ENCODE measurements at regions of chr1 and their contacts with region 1.

Region 1: DNA sequence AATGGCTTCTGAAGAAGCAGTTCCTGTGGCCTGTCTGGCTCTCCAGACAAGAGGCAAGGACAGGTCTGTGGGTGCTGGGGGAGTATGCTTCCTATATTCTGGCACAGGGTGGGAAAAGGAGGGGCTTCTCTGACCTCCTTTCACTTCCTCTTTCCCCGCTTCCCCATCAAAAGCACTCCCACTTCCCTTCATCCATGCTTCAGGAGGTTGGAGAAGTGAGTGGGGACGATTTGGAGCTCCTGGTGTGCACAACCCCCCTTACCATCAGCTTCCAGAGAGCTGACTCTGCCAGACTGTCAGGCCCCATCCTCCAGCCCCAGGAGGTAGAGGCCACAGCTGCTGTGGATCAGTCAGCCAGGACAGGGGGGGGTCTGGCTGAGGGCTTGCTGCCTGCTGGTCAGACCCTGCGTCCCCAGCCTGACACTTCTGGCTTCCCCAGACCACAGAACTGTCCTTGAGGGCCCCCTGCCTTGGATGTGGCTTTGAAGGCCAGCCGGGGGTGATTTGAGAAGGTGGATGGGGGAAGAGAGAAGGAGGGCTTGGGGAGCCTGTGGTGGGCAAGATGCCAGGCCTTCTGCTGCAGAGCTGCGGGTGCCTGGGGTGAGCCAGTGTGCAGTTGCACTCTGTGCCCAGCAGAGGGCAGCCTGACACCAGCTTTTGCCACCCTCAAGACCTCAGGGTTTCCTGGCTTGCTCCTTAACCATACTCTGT is 21.5 kb upstream of the TMEM222 start:
- DNase-seq: peak; percentile 88 to 93 (median 90)
- ATAC-seq: peak; percentile 95
- H3K4me3 ChIP-seq: no peak overlapping the region
- H3K27ac ChIP-seq: no peak overlapping the region
- H3K4me1 ChIP-seq: peaks cover 0 to 7% of the 10 kb centered on the region in 2 experiments; a peak in 2 of 5 replicates
- H3K27me3 ChIP-seq: no peaks in the 10 kb centered on the region
- CTCF ChIP-seq: peak; percentile 97 to 99 (median 98)
- EP300 ChIP-seq: no peak
- POLR2A ChIP-seq: no peak
- RAD21 ChIP-seq: peak; percentile 93 to 98

Region 2: DNA sequence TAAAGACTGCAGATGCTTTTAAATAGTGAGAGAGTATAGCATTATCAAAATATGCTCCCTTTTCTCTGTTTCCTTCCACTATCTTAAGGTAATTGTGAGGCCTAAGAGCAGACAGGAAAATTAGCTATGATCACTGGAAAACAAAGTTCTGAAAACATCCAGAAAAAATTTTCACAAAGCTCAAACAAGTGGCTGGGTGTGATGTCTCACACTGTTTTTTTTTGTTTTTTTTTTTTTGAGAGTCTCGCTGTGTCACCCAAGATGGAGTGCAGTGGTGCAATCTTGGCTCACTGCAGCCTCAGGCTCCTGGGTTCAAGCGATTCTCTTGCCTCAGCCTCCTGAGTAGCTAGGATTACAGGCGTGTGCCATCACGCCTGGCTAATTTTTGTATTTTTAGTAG is 58.8 kb before region 1 on chr1:
- CTCF ChIA-PET with region 1: no interaction called
- POLR2A ChIA-PET with region 1: no interaction called
- in situ Hi-C with region 1: no loop called
- intact Hi-C with region 1: no loop called
- DNase-seq: no peak
- ATAC-seq: no peak
- H3K4me3 ChIP-seq: no peak overlapping the region
- H3K27ac ChIP-seq: no peak overlapping the region
- H3K4me1 ChIP-seq: no peaks in the 10 kb centered on the region; a peak in 2 of 5 replicates
- H3K27me3 ChIP-seq: no peaks in the 10 kb centered on the region
- CTCF ChIP-seq: no peak
- EP300 ChIP-seq: no peak
- POLR2A ChIP-seq: no peak
- RAD21 ChIP-seq: no peak

Region 3: GRCh38 chr1:27357281-27358037 is 57.0 kb after region 1 on chr1:
- CTCF ChIA-PET with region 1: interaction called, 4 read pairs
- POLR2A ChIA-PET with region 1: interaction called, 3 read pairs
- in situ Hi-C with region 1: no loop called
- intact Hi-C with region 1: loop called (anchors 5 kb)
- DNase-seq: peak; percentile 85 to 94 (median 90)
- ATAC-seq: peak; percentile 90
- H3K4me3 ChIP-seq: no peak overlapping the region
- H3K27ac ChIP-seq: no peak overlapping the region
- H3K4me1 ChIP-seq: peaks cover 9 to 53% of the 10 kb centered on the region in 2 experiments
- H3K27me3 ChIP-seq: no peaks in the 10 kb centered on the region
- CTCF ChIP-seq: peak; percentile 95 to 98 (median 96)
- EP300 ChIP-seq: no peak
- POLR2A ChIP-seq: no peak
- RAD21 ChIP-seq: peak; percentile 61 to 84

Region 4: DNA sequence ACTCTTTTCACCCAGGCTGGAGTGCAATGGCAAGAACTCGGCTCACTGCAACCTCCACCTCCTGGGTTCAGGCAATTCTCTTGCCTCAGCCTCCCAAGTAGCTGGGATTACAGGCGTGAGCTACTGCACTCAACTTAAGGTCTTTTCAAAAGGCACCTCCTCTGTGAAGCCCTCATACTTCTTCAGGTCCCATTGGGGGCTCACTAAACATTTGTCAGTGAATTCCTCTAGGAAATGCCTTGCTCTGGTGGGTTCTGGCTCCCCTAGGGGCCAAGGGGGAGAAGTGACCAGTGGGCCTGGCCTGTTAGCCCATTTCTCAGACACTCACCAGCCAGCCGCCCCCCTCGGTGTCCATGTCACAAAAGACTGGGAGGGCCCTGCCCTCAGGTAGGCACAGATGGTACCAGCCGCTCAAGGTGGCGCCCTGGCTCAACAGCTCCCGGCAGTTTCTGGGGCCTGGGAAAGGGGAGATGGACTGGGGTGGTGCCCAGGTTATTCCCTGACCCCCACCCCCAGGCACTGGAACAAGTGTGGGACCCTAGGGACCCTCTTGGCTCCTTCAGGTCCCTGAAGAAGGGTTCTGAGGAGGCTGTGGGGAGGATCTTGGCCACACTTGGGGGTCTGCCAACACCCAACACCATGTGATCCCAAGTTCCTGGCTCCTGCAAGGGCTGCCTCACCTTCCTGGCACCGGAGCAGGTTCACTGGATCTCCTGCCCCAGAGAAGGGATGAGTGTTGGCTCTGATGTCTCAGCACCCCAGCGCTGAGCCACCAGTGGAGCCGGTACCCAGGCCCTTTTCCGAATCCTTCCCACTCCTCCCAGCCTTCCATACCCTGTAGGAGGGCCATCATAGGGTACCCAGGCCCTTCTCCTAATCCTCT is 72.6 kb after region 1 on chr1:
- CTCF ChIA-PET with region 1: interaction called, 5 read pairs
- POLR2A ChIA-PET with region 1: no interaction called
- in situ Hi-C with region 1: no loop called
- intact Hi-C with region 1: loop called (anchors 5 kb)
- DNase-seq: peak; percentile 71 to 78 (median 72)
- ATAC-seq: peak; percentile 87
- H3K4me3 ChIP-seq: no peak overlapping the region
- H3K27ac ChIP-seq: no peak overlapping the region
- H3K4me1 ChIP-seq: peaks cover 7 to 26% of the 10 kb centered on the region in 2 experiments; a peak in 4 of 5 replicates
- H3K27me3 ChIP-seq: no peaks in the 10 kb centered on the region
- CTCF ChIP-seq: peak; percentile 60 to 81 (median 77)
- EP300 ChIP-seq: no peak
- POLR2A ChIP-seq: no peak
- RAD21 ChIP-seq: no peak

Measured in K562 (cell line).